ENCODE measurements at regions of chr15 and their contacts with region 1.

Region 1: GRCh38 chr15:101070502-101071273 is 151.5 kb downstream of the LRRK1 start:
- DNase-seq: no peak
- ATAC-seq: peak in 3 of 4 donors; percentile 45 to 64 (median 60)
- H3K4me3 ChIP-seq: no peak overlapping the region
- H3K27ac ChIP-seq: peak overlapping the region; percentile 58
- H3K4me1 ChIP-seq: no peaks in the 10 kb centered on the region
- H3K27me3 ChIP-seq: no peaks in the 10 kb centered on the region
- CTCF ChIP-seq: no peak

Region 2: DNA sequence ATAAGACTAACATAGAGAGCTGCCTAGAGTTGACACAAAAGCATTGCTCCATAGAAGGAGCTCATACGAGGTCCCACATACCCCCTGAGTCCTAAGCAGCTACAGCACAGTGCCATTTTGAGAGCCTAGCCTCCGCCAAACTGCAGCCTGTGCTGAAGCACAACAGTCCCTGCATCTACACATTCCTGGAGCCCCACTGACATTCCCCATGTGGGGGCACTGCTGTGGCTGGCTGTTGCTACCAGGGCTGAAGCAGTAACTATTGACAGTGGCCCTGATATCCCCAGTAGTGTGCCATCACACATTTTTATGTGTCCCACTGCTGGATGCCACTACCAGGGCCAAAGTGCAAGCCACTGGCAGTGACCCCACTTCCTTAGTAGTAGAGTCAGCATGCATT is 622.2 kb before region 1 on chr15:
- intact Hi-C with region 1: loop called in 1 of 2 experiments (anchors 10 kb)
- DNase-seq: no peak
- ATAC-seq: no peak
- H3K4me3 ChIP-seq: no peak overlapping the region
- H3K27ac ChIP-seq: no peak overlapping the region
- H3K4me1 ChIP-seq: no peaks in the 10 kb centered on the region
- H3K27me3 ChIP-seq: no peaks in the 10 kb centered on the region
- CTCF ChIP-seq: no peak

Region 3: DNA sequence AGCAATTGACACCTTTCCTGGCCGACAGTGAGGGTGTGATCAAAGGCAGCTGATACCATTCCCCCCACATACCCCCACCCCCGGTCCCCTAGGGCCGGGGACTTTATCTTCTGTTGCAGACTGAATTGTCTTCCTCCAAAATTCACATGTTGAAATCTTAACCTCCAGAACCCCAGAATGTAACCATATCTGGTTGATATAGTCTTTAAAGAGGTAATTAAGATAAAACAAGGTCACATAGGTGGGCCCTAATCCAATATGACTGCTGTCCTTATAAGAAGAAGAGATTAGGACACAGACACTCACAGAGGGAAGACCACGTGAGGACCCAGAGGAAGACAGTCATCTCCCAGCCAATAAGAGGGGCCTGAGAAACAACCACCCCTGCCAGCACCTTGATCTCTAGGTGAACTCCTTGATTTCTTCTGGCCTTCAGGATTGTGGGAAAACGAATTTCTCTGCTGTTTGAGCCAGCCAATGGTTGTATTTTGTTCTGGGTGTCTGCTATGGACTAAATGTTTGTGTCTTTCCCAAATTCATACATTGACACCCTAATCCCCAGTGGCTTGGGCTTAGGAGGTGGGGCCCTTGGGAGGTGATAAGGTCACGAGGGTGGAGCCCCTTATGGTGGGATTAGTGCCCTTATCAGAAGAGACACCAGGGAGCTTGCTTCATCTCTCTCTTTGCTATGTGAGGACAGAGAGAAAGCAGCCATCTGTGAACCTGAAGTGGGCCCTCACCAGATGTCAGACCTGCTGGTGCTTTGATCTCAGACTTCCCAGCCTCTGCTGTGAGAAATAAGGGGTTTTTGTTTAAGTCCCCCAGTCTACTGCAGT is 37.2 kb after region 1 on chr15:
- intact Hi-C with region 1: loop called in 1 of 2 experiments (anchors 1 kb)
- DNase-seq: no peak
- ATAC-seq: no peak
- H3K4me3 ChIP-seq: no peak overlapping the region
- H3K27ac ChIP-seq: no peak overlapping the region
- H3K4me1 ChIP-seq: no peaks in the 10 kb centered on the region
- H3K27me3 ChIP-seq: no peaks in the 10 kb centered on the region
- CTCF ChIP-seq: no peak

Measured in psoas muscle (tissue), 8 donors.